H1 (cell line): ENCODE measurements at regions of chr17 and their contacts with region 1.

Region 1: GRCh38 chr17:66673668-66674315 is 161.1 kb upstream of the CACNG5 start:
- DNase-seq: peak; percentile 17 to 69
- H3K4me3 ChIP-seq: no peak overlapping the region
- H3K27ac ChIP-seq: no peak overlapping the region
- H3K4me1 ChIP-seq: no peaks in the 10 kb centered on the region
- H3K27me3 ChIP-seq: no peaks in the 10 kb centered on the region
- CTCF ChIP-seq: peak; percentile 29 to 83 (median 82)
- EP300 ChIP-seq: no peak
- POLR2A ChIP-seq: no peak
- RAD21 ChIP-seq: peak; percentile 96 to 97

Region 2: GRCh38 chr17:66200685-66201092 is 473.1 kb before region 1 on chr17:
- CTCF ChIA-PET with region 1: interaction called, 18 read pairs
- POLR2A ChIA-PET with region 1: no interaction called
- DNase-seq: peak in 1 of 2 experiments; percentile 52
- H3K4me3 ChIP-seq: no peak overlapping the region
- H3K27ac ChIP-seq: no peak overlapping the region
- H3K4me1 ChIP-seq: no peaks in the 10 kb centered on the region
- H3K27me3 ChIP-seq: no peaks in the 10 kb centered on the region; a peak in 1 of 7 replicates
- CTCF ChIP-seq: peak; percentile 3 to 83 (median 60)
- EP300 ChIP-seq: no peak
- POLR2A ChIP-seq: no peak
- RAD21 ChIP-seq: peak; percentile 87

Region 3: GRCh38 chr17:66255112-66255511 is 418.7 kb before region 1 on chr17:
- CTCF ChIA-PET with region 1: interaction called, 10 read pairs
- POLR2A ChIA-PET with region 1: no interaction called
- DNase-seq: no peak
- H3K4me3 ChIP-seq: no peak overlapping the region
- H3K27ac ChIP-seq: no peak overlapping the region
- H3K4me1 ChIP-seq: no peaks in the 10 kb centered on the region
- H3K27me3 ChIP-seq: no peaks in the 10 kb centered on the region
- CTCF ChIP-seq: peak in 2 of 3 experiments; percentile 68 to 75; a peak in 3 of 4 replicates
- EP300 ChIP-seq: no peak
- POLR2A ChIP-seq: no peak
- RAD21 ChIP-seq: peak; percentile 93 to 95

Region 4: DNA sequence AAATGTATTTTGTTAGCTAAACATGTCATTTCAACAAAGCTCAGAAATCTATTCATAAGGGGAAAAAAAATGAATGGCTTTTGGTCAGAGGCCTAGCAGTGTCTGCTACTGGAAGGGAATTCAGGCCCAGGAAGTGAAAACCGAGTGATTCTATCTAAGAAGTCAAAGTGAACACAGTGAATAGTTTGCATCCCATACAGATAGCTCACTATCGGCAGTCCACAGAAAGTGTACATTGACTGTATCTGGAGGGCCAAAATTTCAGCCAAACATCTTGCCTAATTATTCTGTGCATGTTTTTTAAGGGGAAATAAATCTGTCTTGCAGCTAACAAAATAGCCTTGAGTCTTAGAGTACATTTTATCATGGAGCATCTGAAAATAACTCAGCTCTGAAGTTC is 53.3 kb before region 1 on chr17:
- CTCF ChIA-PET with region 1: interaction called, 12 read pairs
- POLR2A ChIA-PET with region 1: no interaction called
- DNase-seq: no peak
- H3K4me3 ChIP-seq: no peak overlapping the region
- H3K27ac ChIP-seq: no peak overlapping the region
- H3K4me1 ChIP-seq: no peaks in the 10 kb centered on the region
- H3K27me3 ChIP-seq: no peaks in the 10 kb centered on the region
- CTCF ChIP-seq: no peak
- EP300 ChIP-seq: no peak
- POLR2A ChIP-seq: no peak
- RAD21 ChIP-seq: no peak